OCI-LY7 (cell line): ENCODE measurements at regions of chr12 and their contacts with region 1.

Region 1: GRCh38 chr12:49018261-49019119 is at the start of gene PRKAG1:
- DNase-seq: peak; percentile 98
- H3K4me3 ChIP-seq: peak within 1 kb of the TSS; percentile 88
- H3K27ac ChIP-seq: peak within 1 kb of the TSS; percentile 90
- H3K4me1 ChIP-seq: peaks cover 24% of the 10 kb centered on the region
- CTCF ChIP-seq: peak; percentile 72
- total RNA-seq, gene PRKAG1: 22.8 and 23.6 TPM in 2 replicates

Region 2: GRCh38 chr12:48671231-48671856 is 347.1 kb before region 1 on chr12:
- CTCF ChIA-PET with region 1: interaction called, 16 read pairs
- POLR2A ChIA-PET with region 1: no interaction called
- intact Hi-C with region 1: no loop called
- DNase-seq: no peak
- H3K4me3 ChIP-seq: no peak overlapping the region
- H3K27ac ChIP-seq: no peak overlapping the region
- H3K4me1 ChIP-seq: no peaks in the 10 kb centered on the region
- CTCF ChIP-seq: no peak

Region 3: GRCh38 chr12:48744251-48745008 is 274.1 kb before region 1 on chr12:
- CTCF ChIA-PET with region 1: no interaction called
- POLR2A ChIA-PET with region 1: no interaction called
- intact Hi-C with region 1: no loop called
- DNase-seq: no peak
- H3K4me3 ChIP-seq: no peak overlapping the region
- H3K27ac ChIP-seq: no peak overlapping the region
- H3K4me1 ChIP-seq: no peaks in the 10 kb centered on the region
- CTCF ChIP-seq: no peak

Region 4: GRCh38 chr12:48957141-48958048 is 61.1 kb before region 1 on chr12 and contains the start of gene ARF3:
- CTCF ChIA-PET with region 1: interaction called, 15 read pairs
- POLR2A ChIA-PET with region 1: interaction called, 4 read pairs
- intact Hi-C with region 1: no loop called
- DNase-seq: peak; percentile 97
- H3K4me3 ChIP-seq: peak within 1 kb of the TSS; percentile 75
- H3K27ac ChIP-seq: peak within 1 kb of the TSS; percentile 61
- H3K4me1 ChIP-seq: peaks cover 31% of the 10 kb centered on the region
- CTCF ChIP-seq: peak; percentile 21; the same call in 1 of the 2 replicates
- total RNA-seq, gene ARF3: 41.2 and 42.9 TPM in 2 replicates

Region 5: GRCh38 chr12:48995061-48995879 is 23.2 kb before region 1 on chr12:
- CTCF ChIA-PET with region 1: interaction called, 9 read pairs
- POLR2A ChIA-PET with region 1: interaction called, 4 read pairs
- intact Hi-C with region 1: loop called (anchors 1 kb)
- DNase-seq: peak; percentile 61
- H3K4me3 ChIP-seq: peak overlapping the region; percentile 24
- H3K27ac ChIP-seq: no peak overlapping the region
- H3K4me1 ChIP-seq: peaks cover 30% of the 10 kb centered on the region
- CTCF ChIP-seq: peak; percentile 88

Region 6: DNA sequence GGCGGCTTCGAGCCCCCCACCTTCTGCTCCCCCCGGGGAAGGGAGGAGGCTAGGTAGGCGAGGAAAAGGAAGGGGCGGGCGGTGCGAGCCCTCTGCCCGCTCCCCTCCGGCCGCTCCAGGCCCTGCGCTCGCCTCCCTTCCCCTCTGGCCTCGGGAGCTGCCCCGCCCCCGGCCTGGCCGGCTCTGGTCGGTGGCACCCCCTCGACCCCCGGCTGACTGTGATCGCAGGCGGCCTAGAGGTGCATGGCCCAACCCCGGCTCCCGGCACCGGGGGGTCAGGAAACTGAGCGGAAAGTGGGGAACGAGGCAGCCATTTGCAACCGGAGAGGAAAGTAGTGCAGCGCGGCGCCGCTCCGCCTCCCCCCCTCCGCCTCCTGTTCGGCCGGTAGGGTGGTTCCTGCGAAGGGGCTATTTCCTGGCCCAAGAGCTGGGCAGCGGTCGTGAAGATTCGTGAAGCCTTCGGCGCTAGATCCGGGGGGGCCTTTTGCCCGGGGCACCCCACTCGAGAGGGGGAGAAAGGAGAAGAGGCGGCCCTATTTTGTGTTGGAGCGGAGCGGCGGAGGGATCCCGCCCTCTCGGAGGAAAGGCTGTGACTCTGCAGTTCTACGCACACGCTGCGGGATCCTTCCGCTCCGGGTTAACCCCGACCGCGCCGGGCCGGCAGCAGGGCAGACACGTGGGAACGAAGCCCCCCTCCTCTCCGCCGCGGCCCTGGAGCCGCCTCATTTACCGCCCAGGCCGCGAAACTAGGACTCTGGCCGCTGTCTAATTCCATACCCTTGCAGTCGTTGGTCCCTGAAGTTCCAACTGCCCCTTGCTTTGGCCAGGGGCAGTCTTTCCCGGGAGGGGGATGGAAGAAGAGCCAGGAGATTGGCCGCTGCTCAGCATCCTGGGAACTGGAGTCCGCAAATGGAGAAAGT is 42.0 kb after region 1 on chr12 and contains the start of gene KMT2D:
- CTCF ChIA-PET with region 1: no interaction called
- POLR2A ChIA-PET with region 1: no interaction called
- intact Hi-C with region 1: loop called (anchors 2 kb)
- DNase-seq: peak; percentile 98
- H3K4me3 ChIP-seq: peak within 1 kb of the TSS; percentile 87
- H3K27ac ChIP-seq: peak within 1 kb of the TSS; percentile 72
- H3K4me1 ChIP-seq: peaks cover 38% of the 10 kb centered on the region
- CTCF ChIP-seq: no peak
- total RNA-seq, gene KMT2D: 41.8 and 43.2 TPM in 2 replicates